Activated naive CD4-positive, alpha-beta T cell treated with anti-CD3 and anti-CD28 coated beads for 36 hours (primary cell): ENCODE measurements at regions of chr12 and their contacts with region 1.

Region 1: GRCh38 chr12:21451529-21451928 is 14.1 kb downstream of the PYROXD1 start:
- DNase-seq: no peak
- H3K4me3 Mint-ChIP-seq: no peak overlapping the region
- H3K27ac Mint-ChIP-seq: no peak overlapping the region
- H3K4me1 Mint-ChIP-seq: peaks cover 26% of the 10 kb centered on the region
- H3K27me3 Mint-ChIP-seq: no peaks in the 10 kb centered on the region

Region 2: GRCh38 chr12:20050221-20050620 is 1401.3 kb before region 1 on chr12:
- CTCF ChIA-PET with region 1: no interaction called
- intact Hi-C with region 1: no loop called
- DNase-seq: no peak
- H3K4me3 Mint-ChIP-seq: no peak overlapping the region
- H3K27ac Mint-ChIP-seq: no peak overlapping the region
- H3K4me1 Mint-ChIP-seq: no peaks in the 10 kb centered on the region
- H3K27me3 Mint-ChIP-seq: no peaks in the 10 kb centered on the region

Region 3: GRCh38 chr12:21220266-21220665 is 231.3 kb before region 1 on chr12:
- CTCF ChIA-PET with region 1: no interaction called
- intact Hi-C with region 1: no loop called
- DNase-seq: no peak
- H3K4me3 Mint-ChIP-seq: no peak overlapping the region
- H3K27ac Mint-ChIP-seq: no peak overlapping the region
- H3K4me1 Mint-ChIP-seq: no peaks in the 10 kb centered on the region
- H3K27me3 Mint-ChIP-seq: no peaks in the 10 kb centered on the region

Region 4: GRCh38 chr12:21296751-21297406 is 154.7 kb before region 1 on chr12:
- CTCF ChIA-PET with region 1: no interaction called
- intact Hi-C with region 1: loop called (anchors 5 kb)
- DNase-seq: peak; percentile 10
- H3K4me3 Mint-ChIP-seq: no peak overlapping the region
- H3K27ac Mint-ChIP-seq: no peak overlapping the region
- H3K4me1 Mint-ChIP-seq: peaks cover 2% of the 10 kb centered on the region
- H3K27me3 Mint-ChIP-seq: peaks cover 3% of the 10 kb centered on the region

Region 5: GRCh38 chr12:21384261-21384660 is 67.3 kb before region 1 on chr12:
- CTCF ChIA-PET with region 1: no interaction called
- intact Hi-C with region 1: no loop called
- DNase-seq: no peak
- H3K4me3 Mint-ChIP-seq: no peak overlapping the region
- H3K27ac Mint-ChIP-seq: no peak overlapping the region
- H3K4me1 Mint-ChIP-seq: no peaks in the 10 kb centered on the region
- H3K27me3 Mint-ChIP-seq: no peaks in the 10 kb centered on the region

Region 6: GRCh38 chr12:21438643-21439042 is 12.9 kb before region 1 on chr12:
- CTCF ChIA-PET with region 1: no interaction called
- intact Hi-C with region 1: loop called (anchors 1 kb)
- DNase-seq: no peak
- H3K4me3 Mint-ChIP-seq: peak overlapping the region; percentile 90
- H3K27ac Mint-ChIP-seq: peak overlapping the region; percentile 95
- H3K4me1 Mint-ChIP-seq: peaks cover 38% of the 10 kb centered on the region
- H3K27me3 Mint-ChIP-seq: no peaks in the 10 kb centered on the region

Region 7: GRCh38 chr12:21539797-21540196 is 88.3 kb after region 1 on chr12:
- CTCF ChIA-PET with region 1: no interaction called
- intact Hi-C with region 1: loop called (anchors 1 kb)
- DNase-seq: no peak
- H3K4me3 Mint-ChIP-seq: no peak overlapping the region
- H3K27ac Mint-ChIP-seq: no peak overlapping the region
- H3K4me1 Mint-ChIP-seq: peaks cover 12% of the 10 kb centered on the region
- H3K27me3 Mint-ChIP-seq: no peaks in the 10 kb centered on the region

Region 8: DNA sequence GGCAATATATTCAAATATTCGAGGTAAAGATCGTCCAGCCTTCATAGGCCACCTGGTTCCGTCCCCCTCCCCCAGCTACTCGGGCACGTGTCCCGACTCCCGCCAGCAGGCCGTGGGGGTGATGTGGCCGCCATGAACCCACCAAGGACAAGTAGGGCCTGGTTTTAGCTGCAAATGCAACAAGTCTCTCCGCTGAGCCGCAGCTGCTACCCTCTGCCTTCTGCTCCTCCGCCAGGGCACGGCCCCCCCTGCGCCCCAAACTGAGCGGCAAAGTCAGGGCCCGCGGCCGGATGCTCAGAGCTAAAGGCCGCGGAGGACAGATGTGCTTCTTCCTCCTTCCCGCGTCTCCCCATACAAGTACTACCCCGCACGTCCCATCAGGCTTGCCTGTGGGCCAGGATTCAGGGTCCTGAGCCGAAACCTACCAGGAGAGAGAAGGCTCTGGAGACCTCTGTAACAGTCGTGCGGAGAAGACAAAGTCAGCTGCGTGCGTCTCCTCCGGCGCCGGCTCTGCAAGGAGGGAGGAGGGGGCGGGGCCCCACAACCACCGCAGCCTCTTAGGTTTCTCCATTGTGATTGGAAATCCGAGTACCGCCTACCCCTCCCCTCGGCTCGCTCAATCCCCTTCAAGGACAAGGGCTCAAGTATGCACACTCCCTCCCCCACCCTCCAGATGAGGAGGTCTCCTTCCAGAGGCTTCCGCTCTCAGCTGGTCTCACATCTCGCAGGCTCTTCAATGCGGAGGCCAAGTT is 206.0 kb after region 1 on chr12 and contains the start of gene LDHB:
- CTCF ChIA-PET with region 1: no interaction called
- intact Hi-C with region 1: loop called (anchors 1 kb)
- DNase-seq: peak; percentile 98
- H3K4me3 Mint-ChIP-seq: peak within 1 kb of the TSS; percentile 98
- H3K27ac Mint-ChIP-seq: peak within 1 kb of the TSS; percentile 98
- H3K4me1 Mint-ChIP-seq: peaks cover 59% of the 10 kb centered on the region
- H3K27me3 Mint-ChIP-seq: no peaks in the 10 kb centered on the region
- total RNA-seq, gene LDHB: 2,296 to 2,461 TPM